Calu3 (cell line): ENCODE measurements at regions of chr16 and their contacts with region 1.

Region 1: DNA sequence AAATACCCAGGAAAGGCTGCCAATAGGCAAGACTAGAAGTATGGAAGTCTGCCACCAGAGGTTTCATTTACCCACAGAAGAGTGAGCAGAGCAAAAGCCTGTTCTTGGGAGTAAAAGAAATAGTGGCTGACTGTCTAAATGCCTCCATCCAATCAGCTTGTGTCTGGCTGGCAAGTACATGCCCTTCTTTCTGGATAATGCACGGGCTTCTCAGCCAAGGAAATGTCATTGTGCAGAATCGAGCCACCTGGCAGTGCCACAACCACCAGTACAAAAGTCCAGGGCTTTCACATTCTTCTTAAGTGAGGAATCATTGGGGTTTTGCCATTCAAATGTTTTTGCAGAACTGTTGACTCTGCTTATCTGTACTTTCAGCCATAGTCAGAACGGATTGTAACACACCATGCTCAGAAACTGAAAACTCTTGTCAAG is 10.1 kb upstream of the ERCC4 start:
- DNase-seq: peak; percentile 38
- H3K4me3 Mint-ChIP-seq: no peak overlapping the region
- H3K27ac Mint-ChIP-seq: no peak overlapping the region
- H3K4me1 Mint-ChIP-seq: no peaks in the 10 kb centered on the region
- H3K27me3 Mint-ChIP-seq: peaks cover 28% of the 10 kb centered on the region
- CTCF ChIP-seq: no peak

Region 2: GRCh38 chr16:13866073-13866472 is 43.8 kb before region 1 on chr16:
- CTCF ChIA-PET with region 1: no interaction called
- intact Hi-C with region 1: loop called (anchors 2 kb)
- DNase-seq: peak; percentile 89
- H3K4me3 Mint-ChIP-seq: no peak overlapping the region
- H3K27ac Mint-ChIP-seq: no peak overlapping the region
- H3K4me1 Mint-ChIP-seq: peaks cover 8% of the 10 kb centered on the region
- H3K27me3 Mint-ChIP-seq: peaks cover 40% of the 10 kb centered on the region
- CTCF ChIP-seq: peak; percentile 82